ENCODE measurements at regions of chr7 and their contacts with region 1.

Region 1: DNA sequence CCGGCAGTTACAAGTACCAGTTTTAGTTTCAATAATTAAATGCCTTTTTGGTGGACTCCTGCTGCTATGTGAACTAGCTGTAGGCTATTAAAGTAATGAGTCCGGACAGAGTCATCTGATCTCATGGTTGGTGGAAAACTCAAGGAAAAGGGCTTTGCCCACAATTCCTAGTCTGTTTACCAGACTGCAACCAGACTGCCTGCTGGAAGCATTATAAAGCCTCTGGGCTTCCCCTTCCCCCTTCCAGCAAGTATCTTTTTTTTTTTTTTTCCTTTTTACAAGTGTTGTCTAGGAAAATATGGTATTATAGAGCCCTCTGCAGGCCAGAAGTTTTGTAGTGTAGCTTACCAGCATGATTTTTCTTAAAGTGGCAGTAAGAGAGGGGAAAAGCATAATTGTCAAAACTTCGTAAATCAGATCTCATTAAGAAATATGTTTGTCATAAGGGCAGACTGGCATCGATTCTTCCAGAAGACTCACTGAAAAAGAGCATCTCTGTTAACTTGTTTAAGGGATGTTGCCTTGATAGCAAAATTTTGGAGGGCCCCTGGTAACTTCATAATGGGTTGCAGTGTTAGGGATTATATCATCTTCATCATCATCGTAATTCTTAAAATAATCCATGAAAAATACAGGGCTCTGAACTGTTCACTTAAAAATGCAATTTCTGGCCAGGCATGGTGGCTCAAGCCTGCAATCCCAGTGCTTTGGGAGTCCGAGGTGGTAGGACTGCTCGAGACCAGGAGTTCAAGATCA is 181.3 kb downstream of the TAX1BP1 start:
- DNase-seq: peak; percentile 10 to 64 (median 18)
- ATAC-seq: peak; percentile 82
- H3K4me3 ChIP-seq: no peak overlapping the region
- H3K27ac ChIP-seq: no peak overlapping the region
- H3K4me1 ChIP-seq: no peaks in the 10 kb centered on the region
- H3K27me3 ChIP-seq: peaks cover 18 to 20% of the 10 kb centered on the region in 2 experiments; a peak in 3 of 5 replicates
- CTCF ChIP-seq: peak; percentile 41 to 69 (median 49); a peak in 4 of 6 replicates
- EP300 ChIP-seq: no peak
- POLR2A ChIP-seq: no peak
- RAD21 ChIP-seq: peak; percentile 61 to 72

Region 2: GRCh38 chr7:27196287-27196767 is 724.9 kb before region 1 on chr7:
- CTCF ChIA-PET with region 1: interaction called, 25 read pairs
- POLR2A ChIA-PET with region 1: no interaction called
- in situ Hi-C with region 1: loop called (anchors 5 kb)
- intact Hi-C with region 1: loop called (anchors 2 kb)
- DNase-seq: peak; percentile 65 to 77 (median 70)
- ATAC-seq: peak; percentile 73
- H3K4me3 ChIP-seq: no peak overlapping the region
- H3K27ac ChIP-seq: no peak overlapping the region
- H3K4me1 ChIP-seq: peaks cover 0 to 20% of the 10 kb centered on the region in 2 experiments; a peak in 1 of 5 replicates
- H3K27me3 ChIP-seq: peaks cover 23 to 49% of the 10 kb centered on the region in 2 experiments
- CTCF ChIP-seq: peak; percentile 66 to 84 (median 76)
- EP300 ChIP-seq: no peak
- POLR2A ChIP-seq: no peak
- RAD21 ChIP-seq: peak; percentile 89 to 93

Region 3: DNA sequence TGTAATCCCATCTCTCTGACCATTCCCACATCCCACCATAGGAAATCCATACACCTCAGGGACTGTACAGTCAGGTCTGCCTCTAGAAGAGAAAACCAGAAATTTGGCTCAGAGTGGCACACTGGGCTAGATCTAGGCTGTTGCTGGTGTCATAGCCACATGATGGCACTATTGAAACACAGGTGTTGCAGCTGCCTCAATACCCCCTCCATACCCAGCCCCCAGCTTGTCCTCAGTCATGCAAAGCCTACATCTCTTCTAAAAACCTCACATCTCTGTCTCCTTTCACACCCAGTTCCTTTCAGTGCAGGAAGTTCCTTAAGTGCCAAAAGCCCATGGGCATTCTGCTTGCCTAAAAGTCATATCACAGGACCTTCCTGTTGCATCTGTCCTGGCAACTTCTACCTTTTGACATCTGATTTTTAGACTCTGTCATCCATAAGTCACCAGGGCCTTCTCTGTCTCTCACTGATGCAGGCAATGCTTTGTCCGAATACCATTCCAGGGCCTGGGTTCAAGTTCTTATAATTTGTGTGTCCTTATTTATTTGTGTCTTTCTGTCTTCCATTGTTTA is 231.6 kb before region 1 on chr7:
- CTCF ChIA-PET with region 1: interaction called, 7 read pairs
- POLR2A ChIA-PET with region 1: no interaction called
- in situ Hi-C with region 1: no loop called
- intact Hi-C with region 1: loop called (anchors 1 kb)
- DNase-seq: peak in 2 of 4 experiments; percentile 30
- ATAC-seq: peak; percentile 82
- H3K4me3 ChIP-seq: no peak overlapping the region
- H3K27ac ChIP-seq: no peak overlapping the region
- H3K4me1 ChIP-seq: no peaks in the 10 kb centered on the region; a peak in 1 of 5 replicates
- H3K27me3 ChIP-seq: no peaks in the 10 kb centered on the region
- CTCF ChIP-seq: peak; percentile 40 to 61 (median 44); a peak in 5 of 6 replicates
- EP300 ChIP-seq: no peak
- POLR2A ChIP-seq: no peak
- RAD21 ChIP-seq: peak; percentile 57 to 80

Region 4: GRCh38 chr7:27739909-27740448 is 181.3 kb before region 1 on chr7 and contains the start of gene TAX1BP1:
- CTCF ChIA-PET with region 1: no interaction called
- POLR2A ChIA-PET with region 1: no interaction called
- in situ Hi-C with region 1: no loop called
- intact Hi-C with region 1: loop called (anchors 10 kb)
- DNase-seq: peak; percentile 95 to 97 (median 95)
- ATAC-seq: peak; percentile 89
- H3K4me3 ChIP-seq: peak within 1 kb of the TSS; percentile 91
- H3K27ac ChIP-seq: peak within 1 kb of the TSS; percentile 93
- H3K4me1 ChIP-seq: peaks cover 6 to 11% of the 10 kb centered on the region in 2 experiments
- H3K27me3 ChIP-seq: no peaks in the 10 kb centered on the region
- CTCF ChIP-seq: no peak
- EP300 ChIP-seq: no peak
- POLR2A ChIP-seq: peak; percentile 91
- RAD21 ChIP-seq: no peak
- polyA plus RNA-seq, gene TAX1BP1: 109 TPM

Region 5: GRCh38 chr7:27873981-27874957 is 47.0 kb before region 1 on chr7:
- CTCF ChIA-PET with region 1: no interaction called
- POLR2A ChIA-PET with region 1: no interaction called
- in situ Hi-C with region 1: no loop called
- intact Hi-C with region 1: no loop called
- DNase-seq: no peak
- ATAC-seq: no peak
- H3K4me3 ChIP-seq: no peak overlapping the region
- H3K27ac ChIP-seq: no peak overlapping the region
- H3K4me1 ChIP-seq: no peaks in the 10 kb centered on the region
- H3K27me3 ChIP-seq: peaks cover 50 to 65% of the 10 kb centered on the region in 2 experiments
- CTCF ChIP-seq: no peak
- EP300 ChIP-seq: no peak
- POLR2A ChIP-seq: no peak
- RAD21 ChIP-seq: no peak

Region 6: DNA sequence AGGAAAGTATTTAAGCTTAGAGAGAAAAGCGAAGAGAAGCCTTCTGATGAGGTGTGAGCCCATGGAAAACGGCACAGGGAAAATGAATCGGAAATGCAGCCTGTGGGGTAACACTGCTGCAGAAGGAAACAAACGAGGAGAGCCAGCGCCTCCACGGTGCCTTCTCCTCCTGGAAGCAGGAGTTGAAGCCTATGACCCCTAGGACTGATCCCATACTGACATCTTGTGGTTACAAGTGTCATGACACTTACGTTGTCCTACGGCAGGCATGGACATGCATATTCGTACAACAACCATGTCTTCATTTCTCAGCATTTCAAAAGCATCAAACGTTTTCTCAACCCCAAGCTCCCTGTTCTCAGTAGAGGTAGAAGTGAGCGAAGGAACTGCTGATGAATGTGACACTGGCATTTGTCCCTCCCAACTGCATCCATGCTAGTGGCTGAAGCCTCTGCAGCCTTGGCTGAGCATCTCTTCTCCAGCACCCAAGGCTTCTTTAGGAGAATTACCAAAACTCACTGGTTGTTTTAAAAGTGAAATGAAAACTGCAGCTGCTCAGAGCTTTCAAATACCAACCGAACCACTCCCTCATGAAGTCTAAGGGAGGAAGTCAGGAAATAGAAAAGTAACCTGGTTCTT is 99.2 kb after region 1 on chr7:
- CTCF ChIA-PET with region 1: no interaction called
- POLR2A ChIA-PET with region 1: no interaction called
- in situ Hi-C with region 1: no loop called
- intact Hi-C with region 1: loop called (anchors 5 kb)
- DNase-seq: peak; percentile 75 to 78 (median 77)
- ATAC-seq: peak; percentile 97
- H3K4me3 ChIP-seq: no peak overlapping the region
- H3K27ac ChIP-seq: no peak overlapping the region
- H3K4me1 ChIP-seq: no peaks in the 10 kb centered on the region
- H3K27me3 ChIP-seq: peaks cover 18 to 30% of the 10 kb centered on the region in 2 experiments; a peak in 4 of 5 replicates
- CTCF ChIP-seq: peak; percentile 81 to 95 (median 89)
- EP300 ChIP-seq: no peak
- POLR2A ChIP-seq: no peak
- RAD21 ChIP-seq: peak; percentile 81 to 90

Region 7: GRCh38 chr7:28093623-28094232 is 172.5 kb after region 1 on chr7:
- CTCF ChIA-PET with region 1: interaction called, 3 read pairs
- POLR2A ChIA-PET with region 1: no interaction called
- in situ Hi-C with region 1: no loop called
- intact Hi-C with region 1: loop called (anchors 5 kb)
- DNase-seq: peak; percentile 46 to 72 (median 50)
- ATAC-seq: peak; percentile 85
- H3K4me3 ChIP-seq: no peak overlapping the region
- H3K27ac ChIP-seq: no peak overlapping the region
- H3K4me1 ChIP-seq: no peaks in the 10 kb centered on the region
- H3K27me3 ChIP-seq: peaks cover under 1 to 22% of the 10 kb centered on the region in 2 experiments; a peak in 2 of 5 replicates
- CTCF ChIP-seq: peak; percentile 63 to 68 (median 65)
- EP300 ChIP-seq: no peak
- POLR2A ChIP-seq: no peak
- RAD21 ChIP-seq: peak; percentile 48 to 63